ENCODE measurements at regions of chr17 and their contacts with region 1.

Region 1: GRCh38 chr17:36148559-36149295 is 27.7 kb downstream of the TBC1D3B start:
- DNase-seq: peak; percentile 66
- ATAC-seq: peak; percentile 90
- H3K4me3 Mint-ChIP-seq: no peak overlapping the region
- H3K27ac Mint-ChIP-seq: no peak overlapping the region
- H3K4me1 Mint-ChIP-seq: peaks cover 9% of the 10 kb centered on the region
- H3K27me3 Mint-ChIP-seq: no peaks in the 10 kb centered on the region; the same call in 1 of the 2 replicates
- CTCF ChIP-seq: peak; percentile 97

Region 2: DNA sequence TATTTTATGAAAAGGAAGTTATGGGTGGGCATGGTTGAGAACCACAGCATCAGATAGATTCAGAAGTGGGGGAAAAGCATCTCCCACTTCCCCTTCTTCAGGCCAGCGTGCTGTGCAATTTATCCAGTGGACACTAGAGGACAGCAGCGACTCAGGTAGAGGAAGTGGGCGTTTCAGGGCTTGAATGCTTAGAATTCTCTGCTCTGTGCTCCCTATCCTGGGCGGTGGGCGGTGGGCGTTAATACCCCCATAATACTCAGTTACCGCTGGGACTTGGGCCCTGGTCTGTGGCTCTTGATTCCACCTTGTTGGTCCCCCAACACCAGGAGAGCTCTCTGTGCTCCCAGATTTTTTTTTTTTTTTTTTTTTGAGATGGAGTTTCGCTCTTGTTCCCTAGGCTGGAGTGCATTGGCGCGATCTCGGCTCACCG is 201.6 kb before region 1 on chr17:
- CTCF ChIA-PET with region 1: interaction called, 12 read pairs
- POLR2A ChIA-PET with region 1: no interaction called
- DNase-seq: peak; percentile 74
- ATAC-seq: peak; percentile 97
- H3K4me3 Mint-ChIP-seq: no peak overlapping the region
- H3K27ac Mint-ChIP-seq: no peak overlapping the region
- H3K4me1 Mint-ChIP-seq: no peaks in the 10 kb centered on the region
- H3K27me3 Mint-ChIP-seq: no peaks in the 10 kb centered on the region; the same call in 1 of the 2 replicates
- CTCF ChIP-seq: peak; percentile 64

Region 3: GRCh38 chr17:35969558-35970380 is 179.0 kb before region 1 on chr17:
- CTCF ChIA-PET with region 1: interaction called, 78 read pairs
- POLR2A ChIA-PET with region 1: no interaction called
- DNase-seq: peak; percentile 88
- ATAC-seq: peak; percentile 92
- H3K4me3 Mint-ChIP-seq: no peak overlapping the region
- H3K27ac Mint-ChIP-seq: no peak overlapping the region
- H3K4me1 Mint-ChIP-seq: no peaks in the 10 kb centered on the region
- H3K27me3 Mint-ChIP-seq: peaks cover 3% of the 10 kb centered on the region; the same call in 1 of the 2 replicates
- CTCF ChIP-seq: peak; percentile 82

Region 4: GRCh38 chr17:35981908-35982330 is 166.8 kb before region 1 on chr17:
- CTCF ChIA-PET with region 1: interaction called, 78 read pairs
- POLR2A ChIA-PET with region 1: no interaction called
- DNase-seq: peak; percentile 61
- ATAC-seq: peak; percentile 75
- H3K4me3 Mint-ChIP-seq: no peak overlapping the region
- H3K27ac Mint-ChIP-seq: no peak overlapping the region
- H3K4me1 Mint-ChIP-seq: no peaks in the 10 kb centered on the region
- H3K27me3 Mint-ChIP-seq: no peaks in the 10 kb centered on the region; the same call in 1 of the 2 replicates
- CTCF ChIP-seq: no peak

Region 5: DNA sequence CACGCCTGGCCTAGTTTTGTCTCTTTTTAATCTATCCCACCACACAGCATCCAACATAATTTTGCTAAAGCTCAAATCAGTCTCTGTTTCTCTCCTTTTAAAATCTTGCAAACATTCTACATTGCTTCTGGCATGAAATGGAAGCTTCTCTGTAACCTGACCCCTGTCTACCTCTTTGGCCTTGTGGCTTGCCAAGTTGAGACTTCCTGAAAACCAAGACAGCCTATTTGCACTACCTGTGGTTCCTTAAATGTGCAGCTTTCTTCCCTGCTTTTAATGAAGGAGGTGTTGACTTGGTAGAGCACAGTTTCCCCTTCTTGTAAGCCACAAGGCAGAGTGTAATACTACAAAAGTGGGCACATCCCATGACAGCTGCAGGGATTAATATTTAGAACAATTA is 52.7 kb before region 1 on chr17:
- CTCF ChIA-PET with region 1: no interaction called
- POLR2A ChIA-PET with region 1: no interaction called
- DNase-seq: no peak
- ATAC-seq: no peak
- H3K4me3 Mint-ChIP-seq: no peak overlapping the region
- H3K27ac Mint-ChIP-seq: no peak overlapping the region
- H3K4me1 Mint-ChIP-seq: peaks cover 12% of the 10 kb centered on the region
- H3K27me3 Mint-ChIP-seq: no peaks in the 10 kb centered on the region
- CTCF ChIP-seq: no peak

Region 6: GRCh38 chr17:36133602-36134236 is 15.0 kb before region 1 on chr17:
- CTCF ChIA-PET with region 1: interaction called, 14 read pairs
- POLR2A ChIA-PET with region 1: no interaction called
- DNase-seq: no peak
- ATAC-seq: no peak
- H3K4me3 Mint-ChIP-seq: no peak overlapping the region
- H3K27ac Mint-ChIP-seq: no peak overlapping the region
- H3K4me1 Mint-ChIP-seq: peaks cover 3% of the 10 kb centered on the region; the same call in 1 of the 2 replicates
- H3K27me3 Mint-ChIP-seq: no peaks in the 10 kb centered on the region
- CTCF ChIP-seq: no peak

Measured in WTC11 (cell line).